A549 (cell line): ENCODE measurements at regions of chr12 and their contacts with region 1.

Region 1: DNA sequence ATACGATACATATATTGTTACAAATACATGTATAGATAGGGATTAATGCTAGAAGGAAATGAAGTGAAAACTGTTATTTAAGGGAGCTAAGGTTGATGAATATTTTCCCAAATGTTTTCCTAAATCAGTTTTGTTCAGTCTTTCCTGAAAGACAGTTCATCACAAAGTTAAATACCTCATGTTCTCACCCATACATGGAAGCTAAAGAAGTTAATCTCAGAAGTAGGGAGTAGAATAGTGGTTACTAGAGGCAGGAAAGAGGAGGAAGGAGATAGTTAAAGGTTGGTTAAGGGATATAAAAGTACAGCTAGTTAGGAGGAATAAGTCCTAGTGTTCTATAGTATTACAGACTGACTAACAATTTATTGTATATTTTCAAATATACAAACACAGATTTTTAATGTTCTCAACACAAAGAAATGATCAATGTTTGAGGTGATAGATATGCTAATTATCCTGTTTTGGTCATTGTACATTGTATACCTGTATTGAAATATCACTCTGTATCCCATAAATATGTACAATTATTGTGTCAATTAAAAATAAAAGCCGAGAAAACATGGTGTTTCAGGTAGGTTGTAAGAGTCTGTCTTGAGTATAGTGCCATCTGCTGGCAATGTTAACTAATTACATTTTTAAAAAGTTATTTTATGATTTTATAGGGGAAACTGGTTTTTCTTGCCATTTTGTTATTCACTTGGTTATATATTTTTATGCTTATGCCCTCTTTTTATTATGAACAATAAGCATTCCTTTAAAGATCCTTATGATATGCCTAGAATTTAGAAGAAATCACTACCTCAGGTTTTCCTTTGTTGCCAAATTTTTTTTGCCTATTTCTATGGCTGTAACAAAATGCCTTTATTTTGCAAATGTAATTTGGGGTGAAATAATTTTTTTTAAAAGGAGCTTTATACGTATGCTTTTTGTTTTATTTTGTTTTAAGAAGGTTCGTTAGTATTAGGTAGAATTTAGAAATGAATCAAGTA is 26.9 kb downstream of the ZDHHC17 start:
- DNase-seq: peak; percentile 21 to 40
- ATAC-seq: peak; percentile 56 to 69; a peak in 4 of 6 replicates
- H3K4me3 ChIP-seq: no peak overlapping the region
- H3K27ac ChIP-seq: no peak overlapping the region
- H3K4me1 ChIP-seq: no peaks in the 10 kb centered on the region
- CTCF ChIP-seq: peak; percentile 89
- EP300 ChIP-seq: no peak
- POLR2A ChIP-seq: no peak
- RAD21 ChIP-seq: peak; percentile 85 to 91

Region 2: GRCh38 chr12:76621582-76622024 is 169.3 kb before region 1 on chr12:
- CTCF ChIA-PET with region 1: interaction called, 72 read pairs
- POLR2A ChIA-PET with region 1: no interaction called
- DNase-seq: peak; percentile 68 to 73
- ATAC-seq: peak; percentile 85 to 92; a peak in 5 of 6 replicates
- H3K4me3 ChIP-seq: no peak overlapping the region
- H3K27ac ChIP-seq: no peak overlapping the region
- H3K4me1 ChIP-seq: no peaks in the 10 kb centered on the region
- CTCF ChIP-seq: peak; percentile 96
- EP300 ChIP-seq: no peak
- POLR2A ChIP-seq: no peak
- RAD21 ChIP-seq: peak; percentile 97 to 99

Region 3: GRCh38 chr12:76631736-76632135 is 159.1 kb before region 1 on chr12:
- CTCF ChIA-PET with region 1: interaction called, 14 read pairs
- POLR2A ChIA-PET with region 1: no interaction called
- DNase-seq: no peak
- ATAC-seq: no peak
- H3K4me3 ChIP-seq: no peak overlapping the region
- H3K27ac ChIP-seq: no peak overlapping the region
- H3K4me1 ChIP-seq: peaks cover 13% of the 10 kb centered on the region
- CTCF ChIP-seq: no peak
- EP300 ChIP-seq: no peak
- POLR2A ChIP-seq: no peak
- RAD21 ChIP-seq: no peak

Region 4: GRCh38 chr12:76763743-76764675 is 26.8 kb before region 1 on chr12 and contains the start of gene ZDHHC17:
- CTCF ChIA-PET with region 1: interaction called, 11 read pairs
- POLR2A ChIA-PET with region 1: interaction called, 3 read pairs
- DNase-seq: peak; percentile 75 to 96
- ATAC-seq: peak; percentile 95 to 96
- H3K4me3 ChIP-seq: peak within 1 kb of the TSS; percentile 72
- H3K27ac ChIP-seq: peak within 1 kb of the TSS; percentile 96 to 97
- H3K4me1 ChIP-seq: 0 out of 3 replicates have a peak, but pooled peaks cover 14% of the 10 kb centered on the region
- CTCF ChIP-seq: no peak
- EP300 ChIP-seq: no peak
- POLR2A ChIP-seq: peak; percentile 95
- RAD21 ChIP-seq: no peak; a peak in 1 of 5 replicates
- polyA plus RNA-seq, gene ZDHHC17: 49.2 and 54.8 TPM in 2 replicates

Region 5: DNA sequence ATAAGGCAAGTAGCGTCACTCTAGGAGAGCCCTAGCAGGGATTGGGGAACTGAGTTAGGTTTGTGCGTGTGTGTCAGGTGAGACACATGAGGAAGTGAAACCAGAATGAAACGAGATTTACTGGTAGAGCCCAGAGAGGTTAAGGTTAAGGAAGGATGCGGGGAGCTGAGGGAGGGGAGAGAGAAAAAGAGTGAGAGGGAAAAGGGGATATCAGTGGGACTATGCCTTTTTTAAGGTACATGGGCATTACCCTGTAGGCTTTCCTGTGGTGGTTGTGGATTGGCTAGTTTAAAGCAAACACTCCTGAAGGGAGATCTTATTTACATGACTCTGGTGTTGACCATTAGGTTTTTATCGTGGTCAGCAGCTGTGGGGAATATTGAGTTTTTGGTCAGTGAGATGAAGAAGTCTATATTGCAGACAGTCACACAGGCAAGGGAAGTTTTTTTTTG is 13.1 kb before region 1 on chr12:
- CTCF ChIA-PET with region 1: interaction called, 13 read pairs
- POLR2A ChIA-PET with region 1: no interaction called
- DNase-seq: no peak
- ATAC-seq: no peak
- H3K4me3 ChIP-seq: no peak overlapping the region
- H3K27ac ChIP-seq: no peak overlapping the region
- H3K4me1 ChIP-seq: no peaks in the 10 kb centered on the region
- CTCF ChIP-seq: no peak
- EP300 ChIP-seq: no peak
- POLR2A ChIP-seq: no peak
- RAD21 ChIP-seq: no peak

Region 6: GRCh38 chr12:76802060-76802459 is 11.2 kb after region 1 on chr12:
- CTCF ChIA-PET with region 1: interaction called, 16 read pairs
- POLR2A ChIA-PET with region 1: no interaction called
- DNase-seq: no peak
- ATAC-seq: no peak
- H3K4me3 ChIP-seq: no peak overlapping the region
- H3K27ac ChIP-seq: no peak overlapping the region
- H3K4me1 ChIP-seq: no peaks in the 10 kb centered on the region
- CTCF ChIP-seq: no peak
- EP300 ChIP-seq: no peak
- POLR2A ChIP-seq: no peak
- RAD21 ChIP-seq: no peak

Region 7: DNA sequence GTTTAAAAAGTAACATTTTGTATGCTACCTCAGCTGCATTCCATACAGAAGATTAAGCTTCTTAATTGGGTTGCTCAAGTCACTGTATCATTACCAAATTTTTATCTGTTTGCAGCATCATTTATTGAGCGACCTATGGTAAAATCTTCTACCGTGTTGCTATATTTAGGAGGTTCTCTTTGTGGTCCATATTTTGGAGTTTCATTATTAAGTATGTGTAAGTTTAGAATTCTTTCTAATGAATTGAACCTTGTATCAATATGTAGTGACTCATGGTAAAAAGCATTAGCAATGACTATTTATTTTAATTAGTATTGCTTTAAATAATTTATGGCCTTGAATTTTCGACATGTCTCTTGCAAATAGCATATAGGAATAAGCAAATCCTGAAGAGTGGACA is 45.8 kb after region 1 on chr12:
- CTCF ChIA-PET with region 1: no interaction called
- POLR2A ChIA-PET with region 1: no interaction called
- DNase-seq: no peak
- ATAC-seq: no peak
- H3K4me3 ChIP-seq: no peak overlapping the region
- H3K27ac ChIP-seq: no peak overlapping the region
- H3K4me1 ChIP-seq: no peaks in the 10 kb centered on the region
- CTCF ChIP-seq: no peak
- EP300 ChIP-seq: no peak
- POLR2A ChIP-seq: no peak
- RAD21 ChIP-seq: no peak